Right cardiac atrium (tissue), 5 donors: ENCODE measurements at regions of chr2 and their contacts with region 1.

Region 1: GRCh38 chr2:142989273-142990204 is 112.1 kb downstream of the KYNU start:
- DNase-seq: no peak
- ATAC-seq: no peak
- H3K4me3 ChIP-seq: no peak overlapping the region
- H3K27ac ChIP-seq: no peak overlapping the region
- H3K4me1 ChIP-seq: no peaks in the 10 kb centered on the region
- H3K27me3 ChIP-seq: no peaks in the 10 kb centered on the region

Region 2: GRCh38 chr2:142675398-142675797 is 314.1 kb before region 1 on chr2:
- intact Hi-C with region 1: loop called in 2 of 4 experiments (anchors 10 kb)
- DNase-seq: no peak
- ATAC-seq: no peak
- H3K4me3 ChIP-seq: no peak overlapping the region
- H3K27ac ChIP-seq: no peak overlapping the region
- H3K4me1 ChIP-seq: no peaks in the 10 kb centered on the region
- H3K27me3 ChIP-seq: no peaks in the 10 kb centered on the region

Region 3: GRCh38 chr2:142682528-142682927 is 307.0 kb before region 1 on chr2:
- intact Hi-C with region 1: loop called in 2 of 4 experiments (anchors 10 kb)
- DNase-seq: no peak
- ATAC-seq: no peak
- H3K4me3 ChIP-seq: no peak overlapping the region
- H3K27ac ChIP-seq: no peak overlapping the region
- H3K4me1 ChIP-seq: no peaks in the 10 kb centered on the region
- H3K27me3 ChIP-seq: no peaks in the 10 kb centered on the region

Region 4: GRCh38 chr2:143110758-143111428 is 121.4 kb after region 1 on chr2:
- intact Hi-C with region 1: no loop called
- DNase-seq: peak; percentile 37 to 67 (median 57)
- ATAC-seq: peak; percentile 41 to 57
- H3K4me3 ChIP-seq: no peak overlapping the region
- H3K27ac ChIP-seq: no peak overlapping the region
- H3K4me1 ChIP-seq: no peaks in the 10 kb centered on the region
- H3K27me3 ChIP-seq: no peaks in the 10 kb centered on the region

Region 5: GRCh38 chr2:143433251-143433650 is 443.7 kb after region 1 on chr2:
- intact Hi-C with region 1: no loop called
- DNase-seq: no peak
- ATAC-seq: peak in 1 of 2 donors; percentile 79
- H3K4me3 ChIP-seq: no peak overlapping the region
- H3K27ac ChIP-seq: no peak overlapping the region
- H3K4me1 ChIP-seq: no peaks in the 10 kb centered on the region
- H3K27me3 ChIP-seq: no peaks in the 10 kb centered on the region